ENCODE measurements at regions of chr17 and their contacts with region 1.

Region 1: GRCh38 chr17:3636154-3636907 is at the starts of genes CTNS and SHPK:
- DNase-seq: peak; percentile 85
- H3K4me3 ChIP-seq: peak within 1 kb of the TSS; percentile 84
- H3K27ac ChIP-seq: peak within 1 kb of the TSS; percentile 99
- H3K27me3 ChIP-seq: no peaks in the 10 kb centered on the region
- CTCF ChIP-seq: no peak
- polyA plus RNA-seq, gene CTNS: 4.2 and 5.7 TPM in 2 replicates
- polyA plus RNA-seq, gene SHPK: 8.7 and 10.9 TPM in 2 replicates

Region 2: GRCh38 chr17:2814481-2815341 is 821.6 kb before region 1 on chr17:
- CTCF ChIA-PET with region 1: interaction called, 15 read pairs
- POLR2A ChIA-PET with region 1: no interaction called
- DNase-seq: no peak
- H3K4me3 ChIP-seq: no peak overlapping the region
- H3K27ac ChIP-seq: no peak overlapping the region
- H3K27me3 ChIP-seq: peaks cover 5% of the 10 kb centered on the region
- CTCF ChIP-seq: no peak

Region 3: DNA sequence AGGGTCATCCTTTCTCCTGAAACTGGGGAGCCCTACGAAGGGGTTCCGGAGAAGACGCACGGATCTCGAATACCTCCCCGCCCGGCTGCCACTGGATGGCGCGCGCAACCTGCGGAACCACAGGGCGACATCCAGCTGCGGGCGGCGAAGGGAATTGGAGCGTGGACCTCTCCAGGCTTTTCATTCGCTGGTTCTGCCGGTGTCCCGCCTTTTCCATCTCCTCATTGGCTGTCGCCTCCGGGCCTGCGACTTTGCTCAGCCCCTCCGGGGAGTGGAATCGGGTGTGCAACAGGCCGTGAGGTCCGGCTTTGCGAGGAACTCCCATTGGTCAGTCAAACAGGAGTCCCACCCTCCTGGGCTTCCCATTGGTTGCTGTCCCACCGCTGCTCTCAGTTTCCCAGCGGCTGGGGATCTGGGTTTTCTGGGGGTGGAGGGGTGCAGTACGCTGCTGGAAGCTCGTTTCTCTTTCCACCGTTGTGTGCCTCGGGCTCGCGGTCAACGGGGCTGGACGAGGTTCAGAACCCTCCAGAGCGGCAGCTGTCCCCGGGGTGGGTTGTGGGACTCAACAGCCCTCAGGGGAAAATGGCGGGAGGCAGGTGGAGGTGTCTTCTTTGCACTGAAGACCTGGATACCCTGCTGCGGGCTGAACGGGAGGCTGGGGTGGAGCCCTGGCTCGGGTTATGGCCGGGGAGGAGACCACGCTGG is 587.4 kb before region 1 on chr17:
- CTCF ChIA-PET with region 1: interaction called, 13 read pairs
- POLR2A ChIA-PET with region 1: interaction called, 7 read pairs
- DNase-seq: peak; percentile 94
- H3K4me3 ChIP-seq: peak overlapping the region; percentile 76
- H3K27ac ChIP-seq: peak overlapping the region; percentile 65
- H3K27me3 ChIP-seq: no peaks in the 10 kb centered on the region
- CTCF ChIP-seq: peak; percentile 60

Region 4: GRCh38 chr17:3659541-3660111 is 23.3 kb after region 1 on chr17:
- CTCF ChIA-PET with region 1: no interaction called
- POLR2A ChIA-PET with region 1: interaction called, 12 read pairs
- DNase-seq: peak; percentile 45
- H3K4me3 ChIP-seq: no peak overlapping the region
- H3K27ac ChIP-seq: peak overlapping the region; percentile 69
- H3K27me3 ChIP-seq: no peaks in the 10 kb centered on the region
- CTCF ChIP-seq: peak; percentile 27

Region 5: GRCh38 chr17:3668279-3669085 is 32.2 kb after region 1 on chr17 and contains the starts of genes EMC6 and TAX1BP3:
- CTCF ChIA-PET with region 1: no interaction called
- POLR2A ChIA-PET with region 1: interaction called, 32 read pairs
- DNase-seq: peak; percentile 90
- H3K4me3 ChIP-seq: peak within 1 kb of the TSS; percentile 97
- H3K27ac ChIP-seq: peak within 1 kb of the TSS; percentile 99
- H3K27me3 ChIP-seq: no peaks in the 10 kb centered on the region
- CTCF ChIP-seq: no peak
- polyA plus RNA-seq, gene EMC6: 23.4 and 28.9 TPM in 2 replicates
- polyA plus RNA-seq, gene TAX1BP3: 163 and 178 TPM in 2 replicates

Measured in AG04450 (cell line).